ENCODE measurements at regions of chr4 and their contacts with region 1.

Region 1: GRCh38 chr4:42371306-42372252 is 25.7 kb upstream of the SHISA3 start:
- DNase-seq: no peak
- H3K4me3 ChIP-seq: no peak overlapping the region
- H3K27ac ChIP-seq: no peak overlapping the region
- H3K4me1 ChIP-seq: no peaks in the 10 kb centered on the region
- H3K27me3 ChIP-seq: no peaks in the 10 kb centered on the region
- CTCF ChIP-seq: peak; percentile 16 to 56 (median 30)

Region 2: GRCh38 chr4:42248984-42249383 is 122.6 kb before region 1 on chr4:
- intact Hi-C with region 1: no loop called
- DNase-seq: no peak
- H3K4me3 ChIP-seq: no peak overlapping the region
- H3K27ac ChIP-seq: no peak overlapping the region
- H3K4me1 ChIP-seq: no peaks in the 10 kb centered on the region
- H3K27me3 ChIP-seq: no peaks in the 10 kb centered on the region
- CTCF ChIP-seq: no peak

Region 3: DNA sequence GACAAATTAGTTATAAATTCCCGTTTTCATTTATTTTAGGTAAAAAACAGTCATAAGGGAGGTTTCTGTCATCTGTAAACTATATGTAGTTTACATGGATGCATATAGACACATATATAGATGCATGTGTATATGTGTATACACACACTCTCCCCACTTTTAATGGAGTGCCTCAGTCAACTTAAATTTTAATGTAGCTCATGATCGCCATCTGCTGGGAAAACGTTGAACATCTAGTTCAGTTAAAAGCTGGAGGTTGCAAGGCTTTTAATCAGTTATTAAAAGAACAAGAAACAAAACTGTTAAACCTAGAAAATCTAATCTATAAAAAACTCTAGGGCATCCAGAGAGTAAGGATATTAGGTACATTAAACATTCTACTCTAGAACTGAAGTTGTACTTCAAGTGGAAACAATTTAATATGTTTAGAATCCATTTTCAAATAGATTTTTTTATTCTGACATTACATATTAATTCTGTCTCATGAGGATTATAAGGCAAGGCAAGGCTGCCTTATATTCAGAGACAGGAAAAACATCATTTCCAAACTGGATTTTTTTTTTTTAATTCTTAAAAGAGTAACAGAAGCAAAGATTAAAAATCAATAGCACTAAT is 148.3 kb after region 1 on chr4:
- intact Hi-C with region 1: loop called (anchors 1 kb)
- DNase-seq: peak in 1 of 2 donors; percentile 67
- H3K4me3 ChIP-seq: no peak overlapping the region
- H3K27ac ChIP-seq: no peak overlapping the region
- H3K4me1 ChIP-seq: no peaks in the 10 kb centered on the region
- H3K27me3 ChIP-seq: no peaks in the 10 kb centered on the region
- CTCF ChIP-seq: peak; percentile 30 to 65 (median 63)

Measured in ascending aorta (tissue), 2 donors.